BJ (cell line): ENCODE measurements at regions of chr16 and their contacts with region 1.

Region 1: DNA sequence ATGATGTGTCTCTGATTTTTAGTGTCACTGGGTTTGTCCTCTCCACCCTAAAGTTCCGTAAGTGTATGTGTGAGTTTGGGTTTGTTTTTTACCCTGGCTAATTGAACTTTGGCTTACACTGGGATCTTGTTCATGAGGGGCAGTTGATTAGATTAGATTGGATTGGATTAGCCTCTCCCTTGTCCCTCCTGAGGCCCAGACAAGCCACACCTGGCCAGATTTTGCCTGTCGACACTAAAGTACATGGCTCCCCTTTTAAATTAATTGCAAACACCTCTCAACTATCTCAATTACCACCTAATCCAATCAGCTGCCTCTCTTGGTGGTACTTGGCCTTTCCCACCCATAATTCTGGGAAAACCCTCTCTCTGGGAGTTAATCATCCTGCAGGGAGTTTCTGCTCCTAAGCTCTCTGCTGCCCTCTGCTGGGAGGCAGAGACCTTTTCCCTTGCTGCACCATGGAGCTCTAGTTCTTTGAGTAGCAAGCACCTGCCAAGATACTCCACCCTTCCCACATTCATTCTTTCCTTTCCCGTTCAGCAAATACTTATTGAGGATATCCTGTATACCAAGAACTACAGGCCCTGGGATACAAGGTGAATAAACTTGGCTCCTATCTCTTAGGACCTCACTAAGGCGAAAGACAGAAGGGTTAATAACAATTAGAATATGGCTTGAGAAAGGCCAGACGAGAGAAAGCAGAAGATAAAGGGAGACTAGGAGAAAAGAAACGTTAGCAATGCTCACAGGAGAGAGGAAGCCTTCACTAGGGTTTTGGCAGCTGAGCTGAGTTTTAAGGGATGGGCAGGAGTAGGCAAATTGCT is 60.0 kb upstream of the MPHOSPH6 start:
- DNase-seq: peak; percentile 6
- H3K4me3 ChIP-seq: no peak overlapping the region
- H3K27me3 ChIP-seq: no peaks in the 10 kb centered on the region
- CTCF ChIP-seq: peak; percentile 95

Region 2: DNA sequence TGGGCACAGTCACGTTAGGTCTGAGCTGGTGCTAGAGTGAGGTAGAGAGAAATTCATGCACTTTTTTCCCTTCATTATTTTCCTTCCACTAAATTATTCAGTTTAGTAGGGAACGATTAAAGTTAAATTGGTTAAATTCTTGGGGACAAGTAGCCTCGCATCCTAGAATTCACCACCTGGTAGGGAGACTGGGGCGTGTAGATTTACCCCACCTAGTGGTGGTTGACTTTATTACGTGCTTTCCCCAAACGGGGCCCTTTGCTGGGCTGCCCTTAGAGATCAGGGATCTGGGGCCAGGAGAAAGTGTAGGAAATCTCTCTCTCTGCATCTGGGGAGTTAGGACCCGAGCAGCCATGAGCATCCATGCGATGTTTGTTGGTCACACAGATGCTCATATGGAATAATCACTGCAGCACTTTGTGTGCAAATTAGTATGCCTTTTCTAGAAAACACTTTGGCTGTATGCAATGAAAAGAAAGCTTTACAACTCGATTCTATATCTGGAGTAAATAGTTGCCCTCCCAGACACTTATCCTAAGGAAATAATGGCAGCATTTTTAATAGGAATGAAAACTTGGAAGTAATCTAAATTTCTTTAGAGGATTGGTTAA is 343.9 kb before region 1 on chr16:
- CTCF ChIA-PET with region 1: interaction called, 25 read pairs
- POLR2A ChIA-PET with region 1: no interaction called
- DNase-seq: no peak
- H3K4me3 ChIP-seq: no peak overlapping the region
- H3K27me3 ChIP-seq: no peaks in the 10 kb centered on the region; the same call in 1 of the 2 replicates
- CTCF ChIP-seq: peak; percentile 75

Region 3: DNA sequence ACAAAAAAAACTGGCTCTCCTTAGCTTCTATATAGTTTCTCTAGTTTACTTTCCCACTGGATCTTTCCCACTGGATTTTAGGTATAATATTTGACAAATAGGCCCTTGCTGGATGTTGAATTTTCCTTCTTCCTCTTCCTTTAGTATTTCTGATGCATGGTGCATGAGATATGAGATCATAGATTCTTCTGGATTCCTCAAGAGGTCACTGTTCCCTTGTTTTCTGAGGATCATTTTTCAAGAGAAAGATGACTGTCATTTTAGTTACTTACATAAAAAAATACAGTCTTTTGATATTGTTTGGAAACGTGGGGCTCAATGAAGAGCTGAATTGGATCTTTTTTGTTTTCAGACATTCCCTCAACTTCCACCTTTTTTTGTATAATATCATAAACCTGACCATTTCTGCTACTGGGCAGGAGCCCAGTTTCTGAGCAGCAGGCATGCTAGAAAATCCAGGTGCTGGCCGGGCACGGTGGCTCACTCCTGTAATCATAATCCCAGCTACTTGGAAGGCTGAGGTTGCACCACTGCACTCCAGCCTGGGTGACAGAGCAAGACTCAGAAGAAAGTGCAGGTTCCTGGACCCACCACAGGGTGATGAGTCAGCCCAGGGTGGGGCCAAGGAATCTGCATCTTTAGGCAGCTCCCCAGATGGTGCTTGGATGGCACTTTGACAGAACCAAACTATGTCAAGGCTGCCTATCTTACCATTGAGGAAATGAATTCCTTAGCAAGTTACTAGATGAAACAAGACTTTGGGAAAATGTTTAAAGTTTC is 289.0 kb before region 1 on chr16:
- CTCF ChIA-PET with region 1: interaction called, 62 read pairs
- POLR2A ChIA-PET with region 1: no interaction called
- DNase-seq: peak; percentile 24
- H3K4me3 ChIP-seq: no peak overlapping the region
- H3K27me3 ChIP-seq: peaks cover 1% of the 10 kb centered on the region
- CTCF ChIP-seq: peak; percentile 52

Region 4: GRCh38 chr16:82016263-82016662 is 213.7 kb before region 1 on chr16:
- CTCF ChIA-PET with region 1: interaction called, 12 read pairs
- POLR2A ChIA-PET with region 1: no interaction called
- DNase-seq: no peak
- H3K4me3 ChIP-seq: no peak overlapping the region
- H3K27me3 ChIP-seq: no peaks in the 10 kb centered on the region
- CTCF ChIP-seq: peak; percentile 32

Region 5: GRCh38 chr16:82031116-82032084 is 198.6 kb before region 1 on chr16:
- CTCF ChIA-PET with region 1: interaction called, 83 read pairs
- POLR2A ChIA-PET with region 1: no interaction called
- DNase-seq: peak; percentile 41
- H3K4me3 ChIP-seq: no peak overlapping the region
- H3K27me3 ChIP-seq: no peaks in the 10 kb centered on the region
- CTCF ChIP-seq: peak; percentile 77

Region 6: GRCh38 chr16:82043680-82044584 is 186.1 kb before region 1 on chr16:
- CTCF ChIA-PET with region 1: interaction called, 29 read pairs
- POLR2A ChIA-PET with region 1: no interaction called
- DNase-seq: peak; percentile 89
- H3K4me3 ChIP-seq: no peak overlapping the region
- H3K27me3 ChIP-seq: peaks cover 2% of the 10 kb centered on the region
- CTCF ChIP-seq: no peak